Endothelial cell of umbilical vein (primary cell): ENCODE measurements at regions of chr16 and their contacts with region 1.

Region 1: GRCh38 chr16:48385272-48386150 is at the start of gene SIAH1:
- DNase-seq: peak; percentile 81
- H3K4me3 ChIP-seq: peak within 1 kb of the TSS; percentile 64 to 99 (median 92)
- H3K27ac ChIP-seq: peak within 1 kb of the TSS; percentile 92
- H3K4me1 ChIP-seq: peaks cover 18% of the 10 kb centered on the region
- H3K27me3 ChIP-seq: no peaks in the 10 kb centered on the region
- CTCF ChIP-seq: no peak
- POLR2A ChIP-seq: peak; percentile 77
- total RNA-seq, gene SIAH1: 19.9 and 21.3 TPM in 2 replicates

Region 2: DNA sequence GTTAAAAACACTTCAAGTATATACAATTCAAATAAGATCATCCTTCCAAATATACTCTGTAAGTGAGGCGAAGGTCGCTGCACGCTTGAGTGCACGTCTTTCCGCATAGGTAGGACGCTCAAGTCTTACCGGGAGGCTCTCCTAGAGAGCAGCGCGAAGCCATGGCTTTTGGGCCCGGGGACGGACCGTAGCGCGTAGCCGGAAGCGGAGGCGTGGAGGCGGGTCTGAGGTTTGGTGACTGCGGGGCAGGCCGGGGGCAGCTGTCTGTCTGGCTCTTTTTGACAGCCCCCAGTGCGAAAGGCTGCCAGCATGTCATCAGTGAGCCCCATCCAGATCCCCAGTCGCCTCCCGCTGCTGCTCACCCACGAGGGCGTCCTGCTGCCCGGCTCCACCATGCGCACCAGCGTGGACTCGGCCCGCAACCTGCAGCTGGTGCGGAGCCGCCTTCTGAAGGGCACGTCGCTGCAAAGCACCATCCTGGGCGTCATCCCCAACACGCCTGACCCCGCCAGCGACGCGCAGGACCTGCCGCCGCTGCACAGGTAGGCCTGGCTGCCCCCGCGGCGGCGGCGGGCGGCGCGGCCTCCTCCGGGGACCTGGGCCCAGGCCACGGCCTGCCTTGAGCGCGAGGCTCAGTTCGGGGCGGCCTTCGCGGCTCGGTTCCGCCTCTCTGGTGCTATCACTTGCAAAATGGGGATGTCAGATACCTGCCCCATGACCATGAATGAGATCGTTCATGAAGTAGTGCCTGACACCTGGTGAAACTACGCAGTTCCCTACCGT is 141.2 kb before region 1 on chr16 and contains the start of gene LONP2:
- CTCF ChIA-PET with region 1: no interaction called
- POLR2A ChIA-PET with region 1: no interaction called
- dilution Hi-C with region 1: no loop called
- intact Hi-C with region 1: loop called (anchors 10 kb)
- DNase-seq: peak; percentile 93
- H3K4me3 ChIP-seq: peak within 1 kb of the TSS; percentile 51 to 96 (median 70)
- H3K27ac ChIP-seq: peak within 1 kb of the TSS; percentile 59
- H3K4me1 ChIP-seq: peaks cover 9% of the 10 kb centered on the region
- H3K27me3 ChIP-seq: no peaks in the 10 kb centered on the region
- CTCF ChIP-seq: no peak
- POLR2A ChIP-seq: peak; percentile 77
- total RNA-seq, gene LONP2: 35.5 and 38.4 TPM in 2 replicates

Region 3: GRCh38 chr16:48353565-48354163 is 31.8 kb before region 1 on chr16:
- CTCF ChIA-PET with region 1: interaction called, 3 read pairs
- POLR2A ChIA-PET with region 1: no interaction called
- dilution Hi-C with region 1: no loop called
- intact Hi-C with region 1: loop called (anchors 1 kb)
- DNase-seq: peak; percentile 75
- H3K4me3 ChIP-seq: no peak overlapping the region
- H3K27ac ChIP-seq: no peak overlapping the region
- H3K4me1 ChIP-seq: no peaks in the 10 kb centered on the region
- H3K27me3 ChIP-seq: no peaks in the 10 kb centered on the region
- CTCF ChIP-seq: peak; percentile 83 to 88
- POLR2A ChIP-seq: no peak

Region 4: GRCh38 chr16:48372744-48373143 is 12.8 kb before region 1 on chr16:
- CTCF ChIA-PET with region 1: interaction called, 10 read pairs
- POLR2A ChIA-PET with region 1: no interaction called
- dilution Hi-C with region 1: no loop called
- intact Hi-C with region 1: loop called (anchors 1 kb)
- DNase-seq: no peak
- H3K4me3 ChIP-seq: no peak overlapping the region
- H3K27ac ChIP-seq: no peak overlapping the region
- H3K4me1 ChIP-seq: no peaks in the 10 kb centered on the region
- H3K27me3 ChIP-seq: no peaks in the 10 kb centered on the region
- CTCF ChIP-seq: no peak
- POLR2A ChIP-seq: no peak

Region 5: GRCh38 chr16:48609652-48610029 is 224.1 kb after region 1 on chr16:
- CTCF ChIA-PET with region 1: no interaction called
- POLR2A ChIA-PET with region 1: no interaction called
- dilution Hi-C with region 1: no loop called
- intact Hi-C with region 1: loop called (anchors 1 kb)
- DNase-seq: no peak
- H3K4me3 ChIP-seq: peak overlapping the region; percentile 83 to 92 (median 84)
- H3K27ac ChIP-seq: peak overlapping the region; percentile 87
- H3K4me1 ChIP-seq: peaks cover 5% of the 10 kb centered on the region
- H3K27me3 ChIP-seq: no peaks in the 10 kb centered on the region
- CTCF ChIP-seq: no peak
- POLR2A ChIP-seq: no peak